ENCODE measurements at regions of chrX and their contacts with region 1.

Region 1: GRCh38 chrX:41655631-41656030 is 33.1 kb upstream of the GPR34 start:
- DNase-seq: peak; percentile 88
- ATAC-seq: peak; percentile 94
- H3K4me3 ChIP-seq: no peak overlapping the region
- H3K27ac ChIP-seq: peak overlapping the region; percentile 70
- H3K4me1 ChIP-seq: peaks cover 15% of the 10 kb centered on the region
- H3K27me3 ChIP-seq: no peaks in the 10 kb centered on the region
- CTCF ChIP-seq: no peak

Region 2: GRCh38 chrX:41580423-41581064 is 75.1 kb before region 1 on chrX:
- CTCF ChIA-PET with region 1: no interaction called
- POLR2A ChIA-PET with region 1: no interaction called
- intact Hi-C with region 1: loop called (anchors 2 kb)
- DNase-seq: no peak
- ATAC-seq: peak; percentile 13; the same call in 1 of the 2 replicates
- H3K4me3 ChIP-seq: no peak overlapping the region
- H3K27ac ChIP-seq: no peak overlapping the region
- H3K4me1 ChIP-seq: no peaks in the 10 kb centered on the region
- H3K27me3 ChIP-seq: no peaks in the 10 kb centered on the region
- CTCF ChIP-seq: no peak

Region 3: GRCh38 chrX:41981481-41982018 is 325.9 kb after region 1 on chrX:
- CTCF ChIA-PET with region 1: no interaction called
- POLR2A ChIA-PET with region 1: no interaction called
- intact Hi-C with region 1: no loop called
- DNase-seq: peak; percentile 19
- ATAC-seq: peak; percentile 11; the same call in 1 of the 2 replicates
- H3K4me3 ChIP-seq: no peak overlapping the region
- H3K27ac ChIP-seq: peak overlapping the region; percentile 42
- H3K4me1 ChIP-seq: peaks cover 34% of the 10 kb centered on the region
- H3K27me3 ChIP-seq: no peaks in the 10 kb centered on the region
- CTCF ChIP-seq: no peak